K562 (cell line): ENCODE measurements at regions of chr3 and their contacts with region 1.

Region 1: GRCh38 chr3:58177747-58178527 is 32.8 kb downstream of the DNASE1L3 start:
- DNase-seq: peak; percentile 76 to 88 (median 78)
- ATAC-seq: peak; percentile 88
- H3K4me3 ChIP-seq: peak overlapping the region; percentile 21; the same call in 1 of the 2 replicates
- H3K27ac ChIP-seq: no peak overlapping the region
- H3K4me1 ChIP-seq: peaks cover 34 to 35% of the 10 kb centered on the region in 2 experiments
- H3K27me3 ChIP-seq: no peaks in the 10 kb centered on the region
- CTCF ChIP-seq: peak; percentile 78
- EP300 ChIP-seq: no peak
- POLR2A ChIP-seq: no peak
- RAD21 ChIP-seq: peak; percentile 44 to 71

Region 2: GRCh38 chr3:57826245-57826951 is 351.5 kb before region 1 on chr3:
- CTCF ChIA-PET with region 1: no interaction called
- POLR2A ChIA-PET with region 1: no interaction called
- in situ Hi-C with region 1: no loop called
- intact Hi-C with region 1: no loop called
- DNase-seq: no peak
- ATAC-seq: no peak
- H3K4me3 ChIP-seq: no peak overlapping the region
- H3K27ac ChIP-seq: no peak overlapping the region
- H3K4me1 ChIP-seq: no peaks in the 10 kb centered on the region; a peak in 1 of 5 replicates
- H3K27me3 ChIP-seq: no peaks in the 10 kb centered on the region
- CTCF ChIP-seq: peak in 1 of 3 experiments; percentile 55; a peak in 2 of 6 replicates
- EP300 ChIP-seq: no peak
- POLR2A ChIP-seq: no peak
- RAD21 ChIP-seq: peak; percentile 55 to 69

Region 3: GRCh38 chr3:57864853-57865252 is 313.1 kb before region 1 on chr3:
- CTCF ChIA-PET with region 1: interaction called, 3 read pairs
- POLR2A ChIA-PET with region 1: no interaction called
- in situ Hi-C with region 1: no loop called
- intact Hi-C with region 1: loop called (anchors 10 kb)
- DNase-seq: peak in 1 of 4 experiments; percentile 6
- ATAC-seq: no peak
- H3K4me3 ChIP-seq: no peak overlapping the region
- H3K27ac ChIP-seq: no peak overlapping the region
- H3K4me1 ChIP-seq: no peaks in the 10 kb centered on the region
- H3K27me3 ChIP-seq: no peaks in the 10 kb centered on the region
- CTCF ChIP-seq: peak in 1 of 3 experiments; percentile 45; a peak in 2 of 6 replicates
- EP300 ChIP-seq: no peak
- POLR2A ChIP-seq: no peak
- RAD21 ChIP-seq: peak; percentile 39 to 46; a peak in 3 of 4 replicates

Region 4: GRCh38 chr3:57961828-57962447 is 216.0 kb before region 1 on chr3:
- CTCF ChIA-PET with region 1: no interaction called
- POLR2A ChIA-PET with region 1: interaction called, 3 read pairs
- in situ Hi-C with region 1: no loop called
- intact Hi-C with region 1: loop called (anchors 1 kb)
- DNase-seq: peak; percentile 14 to 55 (median 25)
- ATAC-seq: peak; percentile 65
- H3K4me3 ChIP-seq: no peak overlapping the region
- H3K27ac ChIP-seq: no peak overlapping the region
- H3K4me1 ChIP-seq: peaks cover 16 to 22% of the 10 kb centered on the region in 2 experiments
- H3K27me3 ChIP-seq: no peaks in the 10 kb centered on the region
- CTCF ChIP-seq: peak; percentile 28 to 63 (median 59); a peak in 5 of 6 replicates
- EP300 ChIP-seq: no peak
- POLR2A ChIP-seq: no peak
- RAD21 ChIP-seq: peak; percentile 62 to 76